Natural killer cell (primary cell): ENCODE measurements at regions of chr1 and their contacts with region 1.

Region 1: GRCh38 chr1:204763706-204764427 is 78.3 kb upstream of the LRRN2 start:
- DNase-seq: peak; percentile 54 to 82
- ATAC-seq: peak; percentile 83 to 99 (median 95)
- H3K4me3 ChIP-seq: no peak overlapping the region
- H3K4me3 Mint-ChIP-seq: peak overlapping the region; percentile 33
- H3K27ac ChIP-seq: no peak overlapping the region
- H3K27ac Mint-ChIP-seq: no peak overlapping the region
- H3K4me1 ChIP-seq: peaks cover 7% of the 10 kb centered on the region
- H3K4me1 Mint-ChIP-seq: peaks cover 7% of the 10 kb centered on the region in 2 donors
- H3K27me3 ChIP-seq: peaks cover 4% of the 10 kb centered on the region
- H3K27me3 Mint-ChIP-seq: peaks cover 20 to 46% of the 10 kb centered on the region in 2 donors
- CTCF ChIP-seq: peak; percentile 74

Region 2: DNA sequence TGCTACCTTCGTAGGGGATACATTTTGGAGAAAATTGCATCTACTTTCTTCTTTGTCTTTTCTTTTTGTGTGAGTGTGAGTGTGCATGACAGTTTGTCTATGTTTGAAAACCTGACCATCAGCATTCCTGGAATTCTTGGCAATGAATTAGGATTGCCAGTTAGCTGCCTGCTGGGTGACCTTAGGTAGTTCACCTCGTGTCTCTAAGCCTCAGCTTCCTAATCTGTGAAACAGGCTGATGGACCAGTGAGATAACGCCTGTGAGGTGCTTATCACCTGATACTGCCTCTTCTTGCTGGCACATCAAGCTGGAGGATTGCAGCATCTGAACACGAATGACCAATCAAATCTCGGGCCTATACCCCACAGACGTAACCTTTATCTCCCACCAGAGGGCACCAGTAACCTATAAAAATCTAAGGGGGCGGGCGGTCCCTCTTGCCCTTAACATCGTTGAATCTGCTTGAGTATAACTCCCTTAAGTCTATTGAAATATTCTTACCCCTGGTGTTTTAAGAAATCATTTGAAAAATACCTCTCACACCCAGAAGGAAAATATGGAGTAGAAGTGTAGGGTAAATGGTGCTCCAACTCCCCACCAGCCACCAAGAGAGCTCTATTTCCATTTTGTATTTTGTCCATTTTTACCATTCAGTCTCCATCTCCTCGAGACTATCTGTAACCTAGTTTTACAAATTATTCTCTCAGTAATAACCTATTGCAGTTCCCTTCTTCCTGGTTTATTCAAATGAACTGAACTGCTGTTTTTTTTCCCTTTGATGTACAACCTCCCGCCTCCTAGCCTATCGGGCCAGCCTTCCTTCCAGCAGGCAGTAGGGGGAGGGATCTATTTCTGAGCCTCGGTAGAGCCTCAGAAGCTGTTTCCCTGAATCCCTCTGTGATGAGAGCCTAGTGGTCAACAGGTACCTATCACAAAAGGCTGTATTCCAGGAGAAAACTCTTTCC is 198.0 kb before region 1 on chr1:
- intact Hi-C with region 1: loop called (anchors 1 kb)
- DNase-seq: peak in 1 of 2 donors; percentile 84
- ATAC-seq: peak; percentile 87 to 97 (median 93)
- H3K4me3 ChIP-seq: no peak overlapping the region
- H3K4me3 Mint-ChIP-seq: no peak overlapping the region
- H3K27ac ChIP-seq: peak overlapping the region; percentile 38
- H3K27ac Mint-ChIP-seq: peak overlapping the region; percentile 33 to 45
- H3K4me1 ChIP-seq: peaks cover 11% of the 10 kb centered on the region
- H3K4me1 Mint-ChIP-seq: peaks cover 32 to 35% of the 10 kb centered on the region in 2 donors
- H3K27me3 ChIP-seq: no peaks in the 10 kb centered on the region
- H3K27me3 Mint-ChIP-seq: no peaks in the 10 kb centered on the region
- CTCF ChIP-seq: peak; percentile 61